Gastrocnemius medialis (tissue), 4 donors: ENCODE measurements at regions of chr10 and their contacts with region 1.

Region 1: DNA sequence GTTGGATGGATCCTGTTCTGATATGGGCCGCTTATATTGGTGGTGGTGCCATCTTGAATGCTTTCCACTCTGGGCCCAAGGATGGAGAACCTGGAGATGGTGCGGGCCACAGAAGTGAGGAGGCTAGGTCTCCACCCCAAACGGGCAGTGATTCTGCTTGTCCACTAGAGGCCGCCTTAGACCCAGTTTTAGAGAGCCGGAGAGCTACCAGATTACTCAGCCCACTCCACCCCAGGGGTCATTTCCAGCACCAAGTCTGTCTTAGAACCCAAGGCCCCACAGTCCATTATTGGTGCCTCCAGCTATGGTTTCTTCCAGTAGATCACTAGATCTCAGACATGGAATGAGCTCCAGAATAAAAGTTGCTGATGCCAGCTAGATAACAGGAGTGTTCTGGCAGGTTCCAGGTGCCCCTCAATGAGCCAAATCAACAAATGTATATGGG is 11.8 kb upstream of the CAMK2G start:
- DNase-seq: peak; percentile 61 to 74
- ATAC-seq: peak; percentile 66 to 75
- H3K4me3 ChIP-seq: no peak overlapping the region
- H3K27ac ChIP-seq: peak overlapping the region; percentile 68 to 92 (median 85)
- H3K4me1 ChIP-seq: peaks cover 30 to 35% of the 10 kb centered on the region in 2 donors
- H3K27me3 ChIP-seq: no peaks in the 10 kb centered on the region
- CTCF ChIP-seq: peak; percentile 86 to 92 (median 88)
- POLR2A ChIP-seq: no peak

Region 2: GRCh38 chr10:73940634-73941221 is 54.6 kb after region 1 on chr10:
- in situ Hi-C with region 1: loop called in 3 of 4 experiments (anchors 5 to 10 kb)
- intact Hi-C with region 1: loop called (anchors 1 kb)
- DNase-seq: peak; percentile 63 to 79
- ATAC-seq: peak; percentile 86 to 90
- H3K4me3 ChIP-seq: peak overlapping the region in 3 of 4 donors; percentile 13 to 39 (median 30)
- H3K27ac ChIP-seq: peak overlapping the region; percentile 69 to 82 (median 80)
- H3K4me1 ChIP-seq: peaks cover 29 to 42% of the 10 kb centered on the region in 2 donors
- H3K27me3 ChIP-seq: no peaks in the 10 kb centered on the region
- CTCF ChIP-seq: peak; percentile 85 to 96 (median 95)
- POLR2A ChIP-seq: no peak

Region 3: DNA sequence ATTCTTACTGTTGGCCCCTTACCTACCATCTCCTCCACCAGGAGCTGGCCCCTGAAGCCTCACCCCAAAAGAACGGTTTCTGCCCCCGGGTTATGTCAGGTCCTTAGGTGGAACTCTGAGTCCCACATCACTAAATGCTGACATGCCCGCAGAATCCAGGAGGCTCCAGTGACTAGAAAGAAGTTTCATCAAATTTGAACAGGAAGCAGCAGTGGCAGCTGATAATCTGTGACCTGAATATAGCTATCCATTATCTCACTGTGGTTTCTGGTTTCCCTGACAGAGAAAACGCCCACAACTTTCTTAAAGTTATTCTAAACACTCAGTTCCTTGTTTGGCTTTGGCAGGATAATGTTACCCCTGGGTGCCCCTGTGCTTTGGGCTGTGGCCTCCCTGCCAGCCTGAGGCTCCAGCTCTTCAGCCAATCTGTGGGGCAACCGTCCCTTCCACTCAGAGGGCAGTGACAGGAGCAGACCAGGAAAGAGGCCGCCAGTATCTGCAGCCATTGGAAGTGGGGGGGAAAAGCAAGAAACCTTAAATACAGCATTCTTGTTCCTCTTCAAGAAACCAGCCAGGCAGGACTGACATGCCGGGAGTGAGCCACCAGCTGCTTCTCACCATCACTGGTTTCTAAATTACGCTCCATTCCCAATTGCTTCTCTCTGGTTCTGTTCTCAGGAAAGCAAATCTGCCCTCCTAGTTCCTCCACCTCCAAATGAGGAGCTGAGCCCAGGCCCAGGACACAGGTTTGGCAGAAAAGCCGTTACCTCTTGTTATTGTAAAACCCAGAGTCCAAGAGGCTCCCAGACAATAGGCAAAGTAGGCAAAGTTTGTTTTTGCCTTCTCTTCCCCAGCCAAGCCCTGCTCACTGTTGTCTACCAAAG is 70.6 kb after region 1 on chr10:
- in situ Hi-C with region 1: no loop called
- intact Hi-C with region 1: loop called (anchors 5 kb)
- DNase-seq: peak in 1 of 2 donors; percentile 27
- ATAC-seq: peak; percentile 43 to 69
- H3K4me3 ChIP-seq: no peak overlapping the region
- H3K27ac ChIP-seq: peak overlapping the region; percentile 41 to 76 (median 64)
- H3K4me1 ChIP-seq: peaks cover 10 to 11% of the 10 kb centered on the region in 2 donors
- H3K27me3 ChIP-seq: no peaks in the 10 kb centered on the region
- CTCF ChIP-seq: no peak
- POLR2A ChIP-seq: no peak

Region 4: DNA sequence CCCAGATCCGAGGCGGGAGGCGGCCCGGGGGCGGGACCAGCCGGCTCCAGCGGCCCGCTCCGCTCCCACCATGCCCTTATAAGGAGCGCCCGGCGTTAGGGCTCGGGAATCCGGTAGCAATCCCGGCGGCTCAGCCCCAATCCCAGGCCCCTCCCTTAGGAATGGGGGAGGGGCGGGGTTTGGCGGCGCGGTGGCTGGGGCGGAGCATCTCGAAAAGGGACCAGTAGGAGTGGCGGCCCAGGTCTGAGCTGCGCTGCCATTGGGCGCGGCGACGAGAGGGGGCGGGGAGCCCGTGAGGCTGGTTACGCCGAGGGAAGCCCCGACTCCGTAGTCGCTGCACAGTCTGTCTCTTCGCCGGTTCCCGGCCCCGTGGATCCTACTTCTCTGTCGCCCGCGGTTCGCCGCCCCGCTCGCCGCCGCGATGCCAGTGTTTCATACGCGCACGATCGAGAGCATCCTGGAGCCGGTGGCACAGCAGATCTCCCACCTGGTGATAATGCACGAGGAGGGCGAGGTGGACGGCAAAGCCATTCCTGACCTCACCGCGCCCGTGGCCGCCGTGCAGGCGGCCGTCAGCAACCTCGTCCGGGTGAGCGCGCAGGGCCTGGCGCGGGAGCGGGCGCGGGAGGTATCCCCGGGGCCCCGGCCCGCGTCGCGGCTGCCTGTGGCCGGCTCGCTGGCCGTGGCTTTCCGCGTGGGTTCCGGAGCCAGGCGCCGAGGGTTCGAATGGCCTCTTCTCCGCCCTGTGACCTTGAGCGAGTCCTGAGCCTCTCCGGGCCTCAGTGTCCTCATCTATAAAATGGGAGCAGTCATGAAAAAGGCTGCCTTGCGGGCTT is 111.9 kb after region 1 on chr10 and contains the start of gene VCL:
- in situ Hi-C with region 1: no loop called
- intact Hi-C with region 1: loop called (anchors 5 kb)
- DNase-seq: peak; percentile 98 to 99
- ATAC-seq: peak; percentile 90
- H3K4me3 ChIP-seq: peak within 1 kb of the TSS; percentile 77 to 88 (median 86)
- H3K27ac ChIP-seq: peak within 1 kb of the TSS; percentile 86 to 97 (median 92)
- H3K4me1 ChIP-seq: peaks cover 32 to 35% of the 10 kb centered on the region in 2 donors
- H3K27me3 ChIP-seq: no peaks in the 10 kb centered on the region
- CTCF ChIP-seq: no peak
- POLR2A ChIP-seq: peak; percentile 97 to 99
- total RNA-seq, gene VCL: 129 to 299 (median 210) TPM

Region 5: DNA sequence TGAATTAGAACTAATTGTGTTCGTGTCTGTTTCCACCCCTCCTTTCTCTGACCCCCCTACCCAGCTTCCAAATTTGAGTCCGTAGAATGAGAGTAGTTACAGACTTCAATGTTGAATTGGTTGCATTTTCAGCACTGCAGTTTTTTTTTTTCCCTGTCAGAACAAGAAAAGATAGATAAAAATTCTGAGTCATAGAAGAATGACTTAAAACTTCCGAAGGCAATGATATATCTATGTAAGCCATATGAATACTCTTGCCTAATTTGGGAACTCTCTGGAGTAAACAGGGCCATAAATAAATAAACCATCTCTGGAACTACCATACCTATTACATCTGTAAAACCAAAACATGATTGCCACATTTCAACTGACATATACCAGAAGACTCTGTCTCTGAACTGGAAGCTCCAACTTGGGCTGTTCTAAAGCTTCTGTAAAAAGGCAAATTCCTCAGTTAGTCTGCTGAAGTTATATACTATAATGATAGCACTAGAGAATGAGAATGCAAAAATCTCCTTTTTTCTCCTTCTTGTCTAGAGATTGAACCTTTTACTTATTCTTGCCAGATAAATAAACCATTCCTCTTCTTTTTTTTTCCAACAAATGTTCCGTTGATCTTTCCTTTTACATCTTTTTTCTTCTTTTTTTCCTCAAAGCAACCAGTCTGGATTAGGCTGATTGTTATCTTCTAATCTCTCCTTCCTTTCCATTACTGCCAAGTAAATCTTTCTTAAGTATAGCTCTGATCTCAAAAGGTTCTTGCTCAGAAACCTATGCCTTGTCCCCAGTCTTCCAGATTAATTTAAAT is 135.3 kb after region 1 on chr10:
- in situ Hi-C with region 1: no loop called
- intact Hi-C with region 1: no loop called
- DNase-seq: no peak
- ATAC-seq: peak in 1 of 2 donors; percentile 39
- H3K4me3 ChIP-seq: no peak overlapping the region
- H3K27ac ChIP-seq: peak overlapping the region; percentile 49 to 67 (median 52)
- H3K4me1 ChIP-seq: peaks cover 71 to 73% of the 10 kb centered on the region in 2 donors
- H3K27me3 ChIP-seq: no peaks in the 10 kb centered on the region
- CTCF ChIP-seq: no peak
- POLR2A ChIP-seq: no peak

Region 6: DNA sequence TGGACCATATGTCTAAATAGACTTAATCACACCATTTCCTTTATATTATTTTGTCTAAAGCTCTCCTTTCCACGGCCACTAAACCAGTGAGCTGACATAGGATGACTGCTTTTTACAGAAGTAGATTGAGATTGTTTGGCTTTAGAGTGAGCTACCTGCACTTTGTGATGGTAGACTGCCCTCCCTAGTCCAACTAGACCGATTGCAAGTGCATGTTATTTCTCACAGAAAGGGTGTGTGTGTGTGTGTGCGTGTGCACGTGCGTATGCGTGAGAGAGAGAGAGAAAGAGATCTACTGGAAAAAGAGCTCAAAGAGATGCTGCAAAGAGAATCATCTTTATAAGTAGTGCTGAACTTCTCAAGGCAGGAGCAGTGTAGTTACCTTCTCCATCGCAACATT is 172.6 kb after region 1 on chr10:
- in situ Hi-C with region 1: no loop called
- intact Hi-C with region 1: loop called (anchors 1 kb)
- DNase-seq: no peak
- ATAC-seq: peak; percentile 22 to 49
- H3K4me3 ChIP-seq: no peak overlapping the region
- H3K27ac ChIP-seq: peak overlapping the region; percentile 93 to 97 (median 95)
- H3K4me1 ChIP-seq: peaks cover 47 to 59% of the 10 kb centered on the region in 2 donors
- H3K27me3 ChIP-seq: no peaks in the 10 kb centered on the region
- CTCF ChIP-seq: no peak
- POLR2A ChIP-seq: no peak